ENCODE measurements at regions of chr11 and their contacts with region 1.

Region 1: GRCh38 chr11:62880803-62881578 is at the start of gene SLC3A2:
- DNase-seq: peak; percentile 93
- ATAC-seq: peak; percentile 83
- H3K4me3 Mint-ChIP-seq: peak within 1 kb of the TSS; percentile 100
- H3K27ac Mint-ChIP-seq: peak within 1 kb of the TSS; percentile 100
- H3K4me1 Mint-ChIP-seq: peaks cover 40% of the 10 kb centered on the region
- H3K27me3 Mint-ChIP-seq: no peaks in the 10 kb centered on the region
- total RNA-seq, gene SLC3A2: 222 to 228 TPM

Region 2: DNA sequence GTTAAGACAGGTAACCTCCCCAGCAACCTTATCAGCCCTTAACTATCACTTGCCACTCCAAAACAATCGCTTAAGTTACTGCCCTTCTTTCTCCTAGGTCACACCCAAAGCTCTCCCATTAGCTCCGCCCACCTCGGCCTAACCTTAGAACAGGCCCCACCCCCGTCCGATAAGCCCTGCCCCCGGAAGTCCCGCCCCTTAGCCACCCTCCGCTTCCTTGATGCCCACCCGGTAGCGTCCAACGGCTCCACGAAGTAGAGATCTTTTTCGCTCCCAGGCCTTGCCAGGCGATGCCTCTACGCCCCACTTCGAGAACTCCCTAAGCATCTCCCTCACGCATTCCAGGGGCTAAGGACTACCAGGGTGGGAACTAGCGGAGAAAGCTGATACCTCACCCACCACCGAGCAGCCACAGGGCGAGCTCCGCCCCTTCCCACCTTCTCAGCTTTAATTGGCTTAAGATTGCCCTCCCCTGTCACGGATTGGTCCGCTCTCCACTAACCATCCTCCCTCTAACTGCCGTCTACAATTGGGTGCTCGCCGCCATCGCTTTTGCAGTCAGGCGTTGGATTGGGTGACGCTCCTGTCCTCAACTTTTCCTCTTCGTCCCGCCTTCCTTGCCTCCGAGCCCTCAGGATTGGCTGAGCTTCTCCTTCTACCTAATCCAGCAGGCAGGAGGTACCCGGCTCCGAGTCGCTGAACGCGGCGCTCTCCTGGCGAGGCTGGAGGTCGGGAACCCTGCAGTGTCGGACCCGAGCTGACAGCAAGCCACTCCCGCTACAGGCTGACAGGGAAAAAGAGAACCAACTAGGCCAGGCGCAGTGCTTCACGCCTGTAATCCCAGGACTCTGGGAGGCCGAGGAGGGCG is 127.0 kb before region 1 on chr11 and contains the start of gene ZBTB3:
- POLR2A ChIA-PET with region 1: interaction called, 18 read pairs
- DNase-seq: peak; percentile 95
- ATAC-seq: peak; percentile 99
- H3K4me3 Mint-ChIP-seq: peak within 1 kb of the TSS; percentile 96
- H3K27ac Mint-ChIP-seq: peak within 1 kb of the TSS; percentile 98
- H3K4me1 Mint-ChIP-seq: peaks cover 26% of the 10 kb centered on the region
- H3K27me3 Mint-ChIP-seq: peaks cover 4% of the 10 kb centered on the region
- total RNA-seq, gene ZBTB3: 14.0 to 17.1 TPM

Region 3: GRCh38 chr11:62831520-62832335 is 49.3 kb before region 1 on chr11 and contains the start of gene STX5:
- POLR2A ChIA-PET with region 1: interaction called, 15 read pairs
- DNase-seq: peak; percentile 99
- ATAC-seq: peak; percentile 91
- H3K4me3 Mint-ChIP-seq: peak within 1 kb of the TSS; percentile 99
- H3K27ac Mint-ChIP-seq: peak within 1 kb of the TSS; percentile 100
- H3K4me1 Mint-ChIP-seq: peaks cover 26% of the 10 kb centered on the region
- H3K27me3 Mint-ChIP-seq: no peaks in the 10 kb centered on the region
- total RNA-seq, gene STX5: 43.4 to 44.3 TPM

Region 4: GRCh38 chr11:62860835-62861563 is 20.0 kb before region 1 on chr11:
- POLR2A ChIA-PET with region 1: interaction called, 117 read pairs
- DNase-seq: no peak
- ATAC-seq: no peak
- H3K4me3 Mint-ChIP-seq: no peak overlapping the region
- H3K27ac Mint-ChIP-seq: peak overlapping the region; percentile 63
- H3K4me1 Mint-ChIP-seq: peaks cover 32% of the 10 kb centered on the region
- H3K27me3 Mint-ChIP-seq: no peaks in the 10 kb centered on the region

Measured in activated naive CD8-positive, alpha-beta T cell treated with anti-CD3 and anti-CD28 coated beads, Interleukin-2, amount 10 ng/mL, durations not matched to agents 7 days and 5 days (primary cell).